ENCODE measurements at regions of chr7 and their contacts with region 1.

Region 1: DNA sequence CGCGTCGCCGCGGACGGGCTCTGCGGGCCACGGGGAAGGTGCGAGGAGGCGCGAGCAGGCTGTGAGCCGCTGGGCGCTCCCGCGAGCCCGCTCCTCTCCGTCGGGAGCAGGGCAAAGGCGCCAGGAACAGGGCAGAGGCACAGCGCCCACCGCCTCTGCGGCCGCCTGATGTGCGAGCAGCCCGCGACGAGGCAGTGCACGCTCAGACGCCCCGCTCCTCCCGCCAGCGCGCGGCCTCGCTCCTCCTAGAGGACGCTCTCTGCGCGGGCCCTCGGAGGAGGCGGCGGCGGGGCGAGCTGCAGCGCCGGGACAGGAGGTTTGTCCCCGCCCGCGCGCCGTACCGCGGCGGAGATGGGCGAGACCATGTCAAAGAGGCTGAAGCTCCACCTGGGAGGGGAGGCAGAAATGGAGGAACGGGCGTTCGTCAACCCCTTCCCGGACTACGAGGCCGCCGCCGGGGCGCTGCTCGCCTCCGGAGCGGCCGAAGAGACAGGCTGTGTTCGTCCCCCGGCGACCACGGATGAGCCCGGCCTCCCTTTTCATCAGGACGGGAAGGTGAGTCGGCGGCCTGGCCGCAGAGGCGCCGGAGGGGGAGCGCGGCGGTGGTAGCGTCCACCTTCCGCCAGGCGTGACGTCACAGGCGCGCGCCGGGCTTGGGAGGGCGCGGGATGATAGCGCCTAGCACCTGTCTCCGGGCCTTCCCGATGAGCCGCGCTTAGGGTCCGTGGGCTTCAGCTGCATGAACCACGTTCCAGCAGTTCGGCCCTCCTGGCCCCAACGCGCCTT is 731 bp downstream of the LANCL2 start:
- DNase-seq: peak; percentile 91 to 98 (median 94)
- ATAC-seq: peak; percentile 87 to 92 (median 88)
- H3K4me3 ChIP-seq: peak overlapping the region; percentile 71 to 99
- H3K4me3 Mint-ChIP-seq: peak overlapping the region; percentile 91 to 98 (median 93)
- H3K27ac ChIP-seq: peak overlapping the region; percentile 98
- H3K27ac Mint-ChIP-seq: peak overlapping the region; percentile 97
- H3K4me1 ChIP-seq: peaks cover 14 to 15% of the 10 kb centered on the region in 2 experiments
- H3K4me1 Mint-ChIP-seq: peaks cover 13 to 37% (median 21%) of the 10 kb centered on the region in 3 donors
- H3K27me3 ChIP-seq: no peaks in the 10 kb centered on the region
- H3K27me3 Mint-ChIP-seq: no peaks in the 10 kb centered on the region

Region 2: DNA sequence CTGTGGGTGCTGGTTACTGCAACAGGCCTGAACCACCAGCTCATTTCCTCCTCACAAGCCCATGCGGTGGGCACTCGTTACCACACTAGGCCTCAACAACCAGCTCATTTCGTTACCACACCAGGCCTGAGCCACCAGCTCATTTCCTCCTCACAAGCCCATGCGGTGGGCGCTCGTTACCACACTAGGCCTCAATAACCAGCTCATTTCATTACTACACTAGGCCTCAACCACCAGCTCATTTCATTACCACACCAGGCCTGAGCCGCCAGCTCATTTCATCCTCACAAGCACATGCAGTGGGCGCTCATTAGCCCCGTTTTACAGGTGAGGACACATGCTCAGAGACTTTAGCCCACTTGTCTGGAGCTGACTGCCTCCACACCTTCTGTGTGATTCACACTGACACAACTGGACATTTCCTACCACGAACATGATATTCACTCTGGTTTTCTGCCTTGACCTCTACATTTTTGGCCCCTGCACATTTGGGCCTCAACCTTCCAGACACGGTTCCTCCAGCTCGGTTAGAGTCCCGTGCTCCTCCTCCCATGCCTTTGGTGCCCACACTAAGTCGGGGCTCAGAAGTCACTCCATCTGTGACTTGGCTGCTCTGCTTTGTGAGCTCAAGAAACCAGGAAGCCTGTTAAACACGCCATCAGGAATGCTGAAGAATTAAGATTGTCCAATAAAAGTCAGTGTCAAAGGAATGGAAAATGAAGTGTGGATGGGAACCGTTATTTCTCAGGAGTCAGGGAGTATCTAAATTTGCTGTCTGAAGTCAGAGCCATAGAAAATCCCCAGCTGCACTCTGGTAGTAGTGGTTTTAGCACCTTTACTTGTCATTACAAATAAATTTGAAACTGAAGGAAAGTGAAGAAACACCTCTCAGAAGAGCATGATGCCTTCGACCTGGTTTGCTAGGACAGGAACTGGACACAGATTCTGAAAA is 56.6 kb before region 1 on chr7:
- CTCF ChIA-PET with region 1: interaction called in 1 of 2 experiments, 20 read pairs
- POLR2A ChIA-PET with region 1: interaction called, 4 to 8 read pairs
- DNase-seq: peak in 34 of 35 experiments; percentile 8 to 83 (median 54)
- ATAC-seq: peak; percentile 60 to 87 (median 81)
- H3K4me3 ChIP-seq: no peak overlapping the region
- H3K4me3 Mint-ChIP-seq: no peak overlapping the region
- H3K27ac ChIP-seq: peak overlapping the region; percentile 78
- H3K27ac Mint-ChIP-seq: peak overlapping the region; percentile 51 to 80
- H3K4me1 ChIP-seq: peaks cover 0 to 43% of the 10 kb centered on the region in 2 experiments
- H3K4me1 Mint-ChIP-seq: peaks cover 16 to 29% (median 17%) of the 10 kb centered on the region in 3 donors
- H3K27me3 ChIP-seq: peaks cover 0 to 6% of the 10 kb centered on the region in 2 experiments
- H3K27me3 Mint-ChIP-seq: peaks cover 0 to 5% of the 10 kb centered on the region in 2 donors

Measured in T-cell (primary cell).